Mammary epithelial cell (primary cell): ENCODE measurements at regions of chr7 and their contacts with region 1.

Region 1: DNA sequence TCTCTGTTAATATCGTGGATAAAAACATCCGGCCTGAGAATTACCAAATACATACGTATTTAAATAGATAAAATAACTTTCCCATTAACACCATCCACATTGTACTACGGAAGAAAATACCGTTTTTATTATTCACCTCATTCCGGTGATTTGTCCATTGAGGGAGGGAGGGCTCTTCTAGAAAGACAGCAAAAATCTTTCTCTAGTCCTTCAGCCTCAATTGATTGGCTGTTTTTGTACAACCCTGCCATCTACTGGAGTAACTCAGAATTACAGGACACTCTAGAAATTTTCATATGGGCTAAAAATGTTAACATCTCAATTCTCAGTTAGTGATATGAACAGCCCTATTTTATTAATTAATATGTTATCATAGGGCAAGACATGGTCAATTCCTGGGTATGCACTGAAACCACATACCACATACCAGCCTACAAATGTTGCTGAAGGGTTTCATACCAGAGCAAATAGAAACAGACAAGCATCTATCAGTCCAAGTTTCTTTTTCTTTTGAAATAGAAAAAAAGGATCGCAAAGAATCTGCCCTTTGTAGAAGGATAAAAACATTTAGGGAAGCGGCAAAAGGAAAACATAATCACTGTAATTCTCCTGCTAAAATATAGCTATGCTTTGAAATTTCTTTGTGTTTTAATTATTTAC is 55.8 kb upstream of the CDCA7L start:
- DNase-seq: peak; percentile 71
- H3K4me3 ChIP-seq: peak overlapping the region in 1 of 3 experiments; percentile 22
- H3K27ac ChIP-seq: peak overlapping the region; percentile 57
- H3K4me1 ChIP-seq: peaks cover 14% of the 10 kb centered on the region
- H3K27me3 ChIP-seq: no peaks in the 10 kb centered on the region
- CTCF ChIP-seq: peak; percentile 54 to 70

Region 2: GRCh38 chr7:20786779-20787659 is 1214.5 kb before region 1 on chr7 and contains the start of gene SP8:
- CTCF ChIA-PET with region 1: no interaction called
- dilution Hi-C with region 1: no loop called
- in situ Hi-C with region 1: no loop called
- intact Hi-C with region 1: loop called (anchors 5 kb)
- DNase-seq: peak; percentile 52
- H3K4me3 ChIP-seq: peak within 1 kb of the TSS; percentile 45 to 52 (median 48)
- H3K27ac ChIP-seq: no peak within 1 kb of the TSS
- H3K4me1 ChIP-seq: peaks cover 20% of the 10 kb centered on the region
- H3K27me3 ChIP-seq: peaks cover 20% of the 10 kb centered on the region
- CTCF ChIP-seq: no peak
- total RNA-seq, gene SP8: 0.21 TPM in 1 of 2 donors, not detected in the other

Region 3: GRCh38 chr7:21261627-21262594 is 739.6 kb before region 1 on chr7:
- CTCF ChIA-PET with region 1: no interaction called
- dilution Hi-C with region 1: no loop called
- in situ Hi-C with region 1: loop called (anchors 10 to 25 kb)
- intact Hi-C with region 1: loop called (anchors 1 kb)
- DNase-seq: peak; percentile 14
- H3K4me3 ChIP-seq: no peak overlapping the region
- H3K27ac ChIP-seq: no peak overlapping the region
- H3K4me1 ChIP-seq: no peaks in the 10 kb centered on the region
- H3K27me3 ChIP-seq: peaks cover 2% of the 10 kb centered on the region
- CTCF ChIP-seq: peak; percentile 67 to 69

Region 4: GRCh38 chr7:21507626-21508343 is 493.7 kb before region 1 on chr7:
- CTCF ChIA-PET with region 1: no interaction called
- dilution Hi-C with region 1: no loop called
- in situ Hi-C with region 1: no loop called
- intact Hi-C with region 1: loop called (anchors 5 kb)
- DNase-seq: peak; percentile 28
- H3K4me3 ChIP-seq: no peak overlapping the region
- H3K27ac ChIP-seq: no peak overlapping the region
- H3K4me1 ChIP-seq: no peaks in the 10 kb centered on the region
- H3K27me3 ChIP-seq: no peaks in the 10 kb centered on the region
- CTCF ChIP-seq: peak; percentile 68 to 86

Region 5: DNA sequence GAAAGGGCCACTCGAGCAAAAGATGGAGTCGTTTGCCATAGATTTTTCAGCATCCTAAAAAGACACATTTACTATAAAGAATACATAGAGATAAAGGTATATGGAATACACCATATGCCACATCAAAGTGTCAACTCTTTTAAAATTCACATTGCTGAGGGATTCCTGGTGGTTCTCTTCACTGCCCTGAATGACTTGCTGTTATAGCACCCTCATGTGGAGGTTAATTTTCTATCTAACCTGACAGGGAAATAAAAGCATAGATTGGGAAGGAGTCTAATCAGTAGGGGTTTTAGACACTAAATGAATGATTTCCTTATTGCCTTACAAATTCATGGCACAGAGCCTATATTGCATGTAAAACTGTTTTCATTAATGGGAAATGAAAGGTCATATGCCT is 432.7 kb before region 1 on chr7:
- CTCF ChIA-PET with region 1: no interaction called
- dilution Hi-C with region 1: no loop called
- in situ Hi-C with region 1: no loop called
- intact Hi-C with region 1: loop called (anchors 10 kb)
- DNase-seq: no peak
- H3K4me3 ChIP-seq: no peak overlapping the region
- H3K27ac ChIP-seq: no peak overlapping the region
- H3K4me1 ChIP-seq: no peaks in the 10 kb centered on the region
- H3K27me3 ChIP-seq: peaks cover 10% of the 10 kb centered on the region
- CTCF ChIP-seq: peak; percentile 32 to 46

Region 6: GRCh38 chr7:21945454-21946227 is 55.8 kb before region 1 on chr7 and contains the start of gene CDCA7L:
- CTCF ChIA-PET with region 1: no interaction called
- dilution Hi-C with region 1: no loop called
- in situ Hi-C with region 1: no loop called
- intact Hi-C with region 1: loop called (anchors 2 kb)
- DNase-seq: peak; percentile 81
- H3K4me3 ChIP-seq: peak within 1 kb of the TSS; percentile 74 to 96 (median 79)
- H3K27ac ChIP-seq: peak within 1 kb of the TSS; percentile 77
- H3K4me1 ChIP-seq: peaks cover 16% of the 10 kb centered on the region
- H3K27me3 ChIP-seq: no peaks in the 10 kb centered on the region
- CTCF ChIP-seq: no peak
- total RNA-seq, gene CDCA7L: 8.5 to 29.8 TPM

Region 7: GRCh38 chr7:22202141-22202540 is 200.7 kb after region 1 on chr7:
- CTCF ChIA-PET with region 1: no interaction called
- dilution Hi-C with region 1: no loop called
- in situ Hi-C with region 1: no loop called
- intact Hi-C with region 1: no loop called
- DNase-seq: no peak
- H3K4me3 ChIP-seq: no peak overlapping the region
- H3K27ac ChIP-seq: no peak overlapping the region
- H3K4me1 ChIP-seq: no peaks in the 10 kb centered on the region
- H3K27me3 ChIP-seq: no peaks in the 10 kb centered on the region
- CTCF ChIP-seq: no peak